B cell (primary cell): ENCODE measurements at regions of chr11 and their contacts with region 1.

Region 1: DNA sequence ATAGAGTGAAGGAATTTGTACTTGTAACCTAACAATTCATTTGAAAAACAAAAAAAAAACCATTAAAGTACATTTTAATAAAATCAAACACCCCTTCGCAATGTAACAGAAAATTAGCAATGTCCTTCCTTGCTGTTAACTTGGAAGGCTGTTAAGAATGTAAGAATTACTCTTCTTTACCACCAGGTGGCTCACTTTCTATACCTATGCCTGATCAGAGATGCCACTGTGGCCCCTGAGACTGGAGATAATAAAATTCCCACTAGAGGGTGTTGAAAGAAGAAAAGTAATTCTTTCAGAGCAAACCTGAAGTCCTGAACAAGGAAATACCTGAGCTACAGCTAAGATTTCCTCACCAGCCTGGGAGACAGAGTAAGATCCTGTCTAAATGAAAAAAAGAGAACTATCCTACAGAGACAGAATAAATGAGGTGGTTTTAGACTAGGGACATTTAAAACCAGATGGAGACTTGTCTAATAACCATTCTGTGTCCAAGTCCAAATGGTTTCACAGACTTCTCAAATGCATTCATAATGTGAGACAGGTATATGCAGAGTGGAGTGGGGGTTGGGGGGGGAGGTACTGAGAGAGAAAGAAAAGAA is 1089.3 kb downstream of the FAM181B start:
- DNase-seq: peak; percentile 36
- ATAC-seq: peak; percentile 54
- H3K4me3 ChIP-seq: no peak overlapping the region
- H3K4me3 Mint-ChIP-seq: no peak overlapping the region
- H3K27ac ChIP-seq: no peak overlapping the region
- H3K27ac Mint-ChIP-seq: no peak overlapping the region
- H3K4me1 ChIP-seq: no peaks in the 10 kb centered on the region
- H3K4me1 Mint-ChIP-seq: no peaks in the 10 kb centered on the region
- H3K27me3 ChIP-seq: peaks cover 0 to 3% (median 1%) of the 10 kb centered on the region in 4 experiments
- H3K27me3 Mint-ChIP-seq: peaks cover 7% of the 10 kb centered on the region
- CTCF ChIP-seq: peak; percentile 84

Region 2: DNA sequence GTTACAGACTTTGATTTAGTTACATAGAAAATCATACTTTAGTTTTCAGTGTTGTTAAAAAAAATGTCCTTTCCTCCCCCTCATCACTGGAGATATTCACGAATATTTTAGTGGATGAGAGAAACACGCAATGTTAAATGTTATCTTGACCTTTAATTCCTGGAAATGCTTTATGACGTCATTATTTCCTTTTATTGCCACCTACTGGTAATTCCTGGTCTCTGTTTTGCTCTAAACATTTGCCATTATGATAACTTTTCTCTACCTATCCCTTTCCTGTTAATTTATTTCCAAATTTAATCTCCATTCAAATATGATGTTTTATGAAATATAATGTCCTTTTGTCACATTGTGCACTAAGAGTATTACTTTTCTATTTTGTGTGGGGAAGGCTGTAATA is 318.7 kb after region 1 on chr11:
- CTCF ChIA-PET with region 1: no interaction called
- POLR2A ChIA-PET with region 1: no interaction called
- intact Hi-C with region 1: loop called (anchors 10 kb)
- DNase-seq: peak; percentile 8
- ATAC-seq: no peak
- H3K4me3 ChIP-seq: no peak overlapping the region
- H3K4me3 Mint-ChIP-seq: no peak overlapping the region
- H3K27ac ChIP-seq: no peak overlapping the region
- H3K27ac Mint-ChIP-seq: no peak overlapping the region
- H3K4me1 ChIP-seq: no peaks in the 10 kb centered on the region
- H3K4me1 Mint-ChIP-seq: peaks cover 5% of the 10 kb centered on the region
- H3K27me3 ChIP-seq: no peaks in the 10 kb centered on the region
- H3K27me3 Mint-ChIP-seq: no peaks in the 10 kb centered on the region
- CTCF ChIP-seq: no peak

Region 3: DNA sequence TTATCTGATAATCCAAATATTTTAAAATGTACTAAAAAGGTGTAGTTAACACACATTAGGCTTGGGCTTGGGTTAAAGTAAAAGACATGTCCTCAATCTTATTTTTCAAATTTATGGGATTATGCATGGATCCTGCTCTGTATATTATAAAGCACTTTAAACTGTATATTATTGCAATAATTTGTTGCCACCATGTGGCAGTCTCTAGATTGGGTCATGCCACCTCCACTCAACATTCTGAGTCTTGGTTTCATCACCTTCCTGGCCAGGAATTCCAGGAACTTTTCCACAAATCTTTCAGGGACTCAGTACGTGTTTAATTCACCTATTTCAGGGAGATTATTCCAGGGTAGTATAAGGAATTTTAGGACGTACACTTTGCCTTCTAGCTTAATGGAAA is 393.8 kb after region 1 on chr11:
- CTCF ChIA-PET with region 1: no interaction called
- POLR2A ChIA-PET with region 1: no interaction called
- intact Hi-C with region 1: loop called (anchors 1 kb)
- DNase-seq: no peak
- ATAC-seq: no peak
- H3K4me3 ChIP-seq: no peak overlapping the region
- H3K4me3 Mint-ChIP-seq: no peak overlapping the region
- H3K27ac ChIP-seq: no peak overlapping the region
- H3K27ac Mint-ChIP-seq: no peak overlapping the region
- H3K4me1 ChIP-seq: no peaks in the 10 kb centered on the region
- H3K4me1 Mint-ChIP-seq: no peaks in the 10 kb centered on the region
- H3K27me3 ChIP-seq: no peaks in the 10 kb centered on the region
- H3K27me3 Mint-ChIP-seq: no peaks in the 10 kb centered on the region
- CTCF ChIP-seq: no peak

Region 4: DNA sequence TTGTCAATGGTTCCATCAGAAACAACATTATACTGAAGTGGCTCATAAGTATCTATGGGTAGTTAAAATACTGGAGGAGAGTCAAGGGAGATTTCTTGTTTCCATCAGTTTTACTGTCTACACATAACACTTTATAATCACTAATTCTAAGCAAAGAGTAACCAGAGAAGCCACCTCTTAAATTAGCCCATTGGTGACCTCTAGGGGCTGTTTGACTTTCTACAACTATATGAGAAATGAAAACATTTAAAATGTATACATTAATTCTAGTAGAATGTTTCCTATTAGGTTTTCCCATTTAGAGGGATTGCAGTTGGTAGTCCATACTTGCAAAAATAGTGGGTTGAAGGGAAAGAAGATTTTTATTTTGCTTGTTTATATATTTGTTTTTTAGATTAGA is 585.0 kb after region 1 on chr11:
- CTCF ChIA-PET with region 1: interaction called, 4 read pairs
- POLR2A ChIA-PET with region 1: no interaction called
- intact Hi-C with region 1: loop called (anchors 1 kb)
- DNase-seq: no peak
- ATAC-seq: no peak
- H3K4me3 ChIP-seq: no peak overlapping the region
- H3K4me3 Mint-ChIP-seq: no peak overlapping the region
- H3K27ac ChIP-seq: no peak overlapping the region
- H3K27ac Mint-ChIP-seq: no peak overlapping the region
- H3K4me1 ChIP-seq: no peaks in the 10 kb centered on the region
- H3K4me1 Mint-ChIP-seq: no peaks in the 10 kb centered on the region
- H3K27me3 ChIP-seq: no peaks in the 10 kb centered on the region
- H3K27me3 Mint-ChIP-seq: no peaks in the 10 kb centered on the region
- CTCF ChIP-seq: peak; percentile 36

Region 5: DNA sequence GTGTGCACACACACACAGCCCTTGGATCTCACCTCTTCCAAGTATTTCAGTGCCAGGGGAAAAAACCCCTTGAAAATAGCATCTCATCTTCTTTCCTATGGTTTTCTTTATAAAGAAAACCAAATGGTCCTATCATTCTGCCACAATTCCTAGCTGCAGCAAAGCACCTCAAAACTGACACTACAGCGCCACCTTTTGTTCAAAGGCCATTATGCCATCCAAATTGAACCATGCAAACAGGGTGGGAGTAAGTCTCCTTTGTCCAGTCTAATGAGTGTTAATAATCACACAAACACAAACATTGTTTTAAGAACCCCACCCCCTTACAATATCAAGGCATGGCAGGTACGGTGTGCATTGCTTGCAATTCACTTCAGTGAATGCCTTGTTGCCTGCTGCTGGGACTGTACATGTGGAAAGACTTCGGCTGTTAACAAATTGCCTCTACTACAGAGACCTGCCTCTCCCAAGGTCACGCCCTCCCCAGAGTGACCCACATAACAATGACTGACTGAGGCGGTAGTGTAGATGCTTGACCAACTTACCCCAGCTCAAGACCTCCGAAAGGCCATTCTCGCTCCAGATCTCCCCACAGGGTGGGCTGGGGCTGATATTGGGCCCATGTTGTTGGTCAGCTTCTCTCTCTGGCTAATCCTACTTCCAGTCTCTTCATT is 1057.6 kb after region 1 on chr11:
- CTCF ChIA-PET with region 1: interaction called, 44 read pairs
- POLR2A ChIA-PET with region 1: no interaction called
- intact Hi-C with region 1: no loop called
- DNase-seq: peak; percentile 12
- ATAC-seq: no peak
- H3K4me3 ChIP-seq: no peak overlapping the region
- H3K4me3 Mint-ChIP-seq: no peak overlapping the region
- H3K27ac ChIP-seq: no peak overlapping the region
- H3K27ac Mint-ChIP-seq: no peak overlapping the region
- H3K4me1 ChIP-seq: no peaks in the 10 kb centered on the region
- H3K4me1 Mint-ChIP-seq: no peaks in the 10 kb centered on the region
- H3K27me3 ChIP-seq: peaks cover 0 to 5% (median 2%) of the 10 kb centered on the region in 4 experiments
- H3K27me3 Mint-ChIP-seq: peaks cover 12% of the 10 kb centered on the region
- CTCF ChIP-seq: peak; percentile 61